AG04450 (cell line): ENCODE measurements at regions of chr20 and their contacts with region 1.

Region 1: GRCh38 chr20:50095476-50096078 is 17.4 kb downstream of the UBE2V1 start:
- DNase-seq: no peak
- H3K4me3 ChIP-seq: no peak overlapping the region
- H3K27ac ChIP-seq: no peak overlapping the region
- H3K27me3 ChIP-seq: no peaks in the 10 kb centered on the region
- CTCF ChIP-seq: no peak

Region 2: GRCh38 chr20:48690683-48691287 is 1404.8 kb before region 1 on chr20:
- CTCF ChIA-PET with region 1: interaction called, 10 read pairs
- POLR2A ChIA-PET with region 1: no interaction called
- DNase-seq: no peak
- H3K4me3 ChIP-seq: no peak overlapping the region
- H3K27ac ChIP-seq: no peak overlapping the region
- H3K27me3 ChIP-seq: no peaks in the 10 kb centered on the region
- CTCF ChIP-seq: no peak

Region 3: GRCh38 chr20:49964964-49965780 is 130.4 kb before region 1 on chr20:
- CTCF ChIA-PET with region 1: no interaction called
- POLR2A ChIA-PET with region 1: interaction called, 11 read pairs
- DNase-seq: no peak
- H3K4me3 ChIP-seq: no peak overlapping the region
- H3K27ac ChIP-seq: no peak overlapping the region
- H3K27me3 ChIP-seq: no peaks in the 10 kb centered on the region
- CTCF ChIP-seq: peak; percentile 58

Region 4: GRCh38 chr20:50146732-50147662 is 51.4 kb after region 1 on chr20:
- CTCF ChIA-PET with region 1: no interaction called
- POLR2A ChIA-PET with region 1: no interaction called
- DNase-seq: no peak
- H3K4me3 ChIP-seq: no peak overlapping the region
- H3K27ac ChIP-seq: peak overlapping the region; percentile 47
- H3K27me3 ChIP-seq: no peaks in the 10 kb centered on the region
- CTCF ChIP-seq: no peak